ENCODE measurements at regions of chr12 and their contacts with region 1.

Region 1: DNA sequence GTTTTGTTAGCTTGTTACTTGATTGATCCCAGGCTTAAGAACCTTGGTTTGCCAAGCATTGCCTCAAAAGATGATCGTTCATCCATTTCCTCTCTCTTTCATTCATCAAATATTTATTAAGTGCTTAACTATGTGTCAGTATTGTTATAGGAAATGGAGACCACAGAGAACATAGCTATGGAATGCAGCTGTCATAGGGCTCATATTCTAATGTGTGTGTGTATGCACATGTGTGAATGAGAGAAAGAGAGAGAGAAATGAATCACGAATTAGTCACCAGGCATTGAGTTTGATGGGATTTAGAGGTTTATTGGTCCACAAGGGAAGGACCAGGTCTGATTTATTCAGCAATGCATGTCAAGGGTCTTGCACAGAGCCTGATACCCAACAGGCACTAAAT is 71.0 kb upstream of the FBXO21 start:
- DNase-seq: no peak
- ATAC-seq: no peak
- H3K4me3 ChIP-seq: no peak overlapping the region
- H3K27ac ChIP-seq: no peak overlapping the region
- H3K4me1 ChIP-seq: no peaks in the 10 kb centered on the region
- H3K27me3 ChIP-seq: no peaks in the 10 kb centered on the region
- CTCF ChIP-seq: no peak
- POLR2A ChIP-seq: no peak

Region 2: GRCh38 chr12:117273091-117273490 is 11.8 kb after region 1 on chr12:
- in situ Hi-C with region 1: no loop called
- intact Hi-C with region 1: no loop called
- DNase-seq: peak; percentile 39 to 54
- ATAC-seq: peak; percentile 93 to 94
- H3K4me3 ChIP-seq: no peak overlapping the region
- H3K27ac ChIP-seq: no peak overlapping the region
- H3K4me1 ChIP-seq: peaks cover 0 to 7% of the 10 kb centered on the region in 2 donors
- H3K27me3 ChIP-seq: no peaks in the 10 kb centered on the region
- CTCF ChIP-seq: no peak
- POLR2A ChIP-seq: no peak

Region 3: GRCh38 chr12:117284140-117284539 is 22.9 kb after region 1 on chr12:
- in situ Hi-C with region 1: no loop called
- intact Hi-C with region 1: loop called (anchors 2 kb)
- DNase-seq: no peak
- ATAC-seq: no peak
- H3K4me3 ChIP-seq: no peak overlapping the region
- H3K27ac ChIP-seq: no peak overlapping the region
- H3K4me1 ChIP-seq: no peaks in the 10 kb centered on the region
- H3K27me3 ChIP-seq: no peaks in the 10 kb centered on the region
- CTCF ChIP-seq: no peak
- POLR2A ChIP-seq: no peak

Measured in gastrocnemius medialis (tissue), 4 donors.